Aorta (tissue), 5 donors: ENCODE measurements at regions of chr2 and their contacts with region 1.

Region 1: DNA sequence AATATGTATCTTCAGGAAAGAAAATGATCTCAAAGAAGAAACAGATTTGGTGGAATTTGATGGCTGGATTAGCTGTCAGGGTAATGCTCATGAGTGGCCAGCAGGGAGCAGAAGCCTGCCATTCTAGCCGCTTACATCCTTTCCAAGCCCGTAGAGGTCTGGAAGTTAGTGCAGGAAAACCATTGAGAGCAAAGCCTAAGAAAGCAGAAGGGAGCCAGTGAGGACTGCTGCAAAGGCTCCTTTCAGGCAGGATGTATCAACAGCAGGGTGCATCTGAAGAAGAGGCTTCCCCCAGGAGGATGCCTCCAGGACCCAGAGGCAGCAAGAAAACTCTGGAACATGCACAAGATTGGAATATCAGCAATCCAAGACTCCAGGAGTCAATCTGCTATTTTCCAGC is 22.9 kb upstream of the LBH start:
- DNase-seq: no peak
- ATAC-seq: peak; percentile 90
- H3K4me3 ChIP-seq: no peak overlapping the region
- H3K27ac ChIP-seq: no peak overlapping the region
- H3K4me1 ChIP-seq: no peaks in the 10 kb centered on the region
- H3K27me3 ChIP-seq: no peaks in the 10 kb centered on the region

Region 2: DNA sequence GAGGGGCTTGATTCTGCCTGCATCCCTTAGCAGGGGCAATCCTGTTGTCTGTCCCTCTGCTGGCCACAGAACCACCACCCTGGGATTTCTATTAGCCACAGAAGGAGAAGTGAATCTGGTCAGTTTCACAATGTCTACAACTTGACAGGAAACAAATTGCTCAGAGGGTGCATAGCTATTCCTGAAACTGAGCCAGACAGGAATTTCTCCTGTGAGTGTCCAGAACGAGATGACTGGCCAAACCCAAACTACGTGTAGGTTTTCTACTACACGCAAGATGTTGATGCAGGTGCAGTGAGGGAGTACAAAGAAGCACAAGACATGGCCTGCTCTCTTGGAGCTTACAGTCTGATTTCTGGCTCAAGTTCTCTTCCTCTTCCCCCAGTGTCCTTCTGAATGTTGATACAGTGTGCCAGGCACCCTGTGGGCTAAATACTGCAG is 891.4 kb before region 1 on chr2:
- intact Hi-C with region 1: no loop called
- DNase-seq: no peak
- ATAC-seq: no peak
- H3K4me3 ChIP-seq: no peak overlapping the region
- H3K27ac ChIP-seq: no peak overlapping the region
- H3K4me1 ChIP-seq: no peaks in the 10 kb centered on the region
- H3K27me3 ChIP-seq: no peaks in the 10 kb centered on the region

Region 3: DNA sequence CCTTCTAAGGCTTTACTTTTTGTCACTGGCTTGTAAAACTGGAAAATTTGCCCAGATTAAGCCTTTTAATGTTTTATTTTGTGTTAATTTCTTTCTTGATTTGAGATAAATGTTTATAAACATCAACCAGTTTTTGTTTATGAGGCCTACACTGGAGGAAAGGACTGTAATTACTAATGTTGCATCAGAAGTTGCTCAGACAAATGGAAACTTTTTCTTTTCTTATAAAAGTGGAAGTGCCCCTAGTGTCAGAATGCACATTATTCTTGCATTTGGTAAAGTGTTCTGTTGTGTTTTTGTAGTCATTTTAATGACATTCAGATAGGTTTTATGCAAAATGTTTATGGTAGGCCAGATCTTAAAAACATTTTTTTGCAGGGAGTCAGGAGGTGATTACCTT is 263.9 kb after region 1 on chr2:
- intact Hi-C with region 1: loop called in 1 of 2 experiments (anchors 5 kb)
- DNase-seq: no peak
- ATAC-seq: no peak
- H3K4me3 ChIP-seq: no peak overlapping the region
- H3K27ac ChIP-seq: no peak overlapping the region
- H3K4me1 ChIP-seq: no peaks in the 10 kb centered on the region
- H3K27me3 ChIP-seq: no peaks in the 10 kb centered on the region